ENCODE measurements at regions of chr1 and their contacts with region 1.

Region 1: DNA sequence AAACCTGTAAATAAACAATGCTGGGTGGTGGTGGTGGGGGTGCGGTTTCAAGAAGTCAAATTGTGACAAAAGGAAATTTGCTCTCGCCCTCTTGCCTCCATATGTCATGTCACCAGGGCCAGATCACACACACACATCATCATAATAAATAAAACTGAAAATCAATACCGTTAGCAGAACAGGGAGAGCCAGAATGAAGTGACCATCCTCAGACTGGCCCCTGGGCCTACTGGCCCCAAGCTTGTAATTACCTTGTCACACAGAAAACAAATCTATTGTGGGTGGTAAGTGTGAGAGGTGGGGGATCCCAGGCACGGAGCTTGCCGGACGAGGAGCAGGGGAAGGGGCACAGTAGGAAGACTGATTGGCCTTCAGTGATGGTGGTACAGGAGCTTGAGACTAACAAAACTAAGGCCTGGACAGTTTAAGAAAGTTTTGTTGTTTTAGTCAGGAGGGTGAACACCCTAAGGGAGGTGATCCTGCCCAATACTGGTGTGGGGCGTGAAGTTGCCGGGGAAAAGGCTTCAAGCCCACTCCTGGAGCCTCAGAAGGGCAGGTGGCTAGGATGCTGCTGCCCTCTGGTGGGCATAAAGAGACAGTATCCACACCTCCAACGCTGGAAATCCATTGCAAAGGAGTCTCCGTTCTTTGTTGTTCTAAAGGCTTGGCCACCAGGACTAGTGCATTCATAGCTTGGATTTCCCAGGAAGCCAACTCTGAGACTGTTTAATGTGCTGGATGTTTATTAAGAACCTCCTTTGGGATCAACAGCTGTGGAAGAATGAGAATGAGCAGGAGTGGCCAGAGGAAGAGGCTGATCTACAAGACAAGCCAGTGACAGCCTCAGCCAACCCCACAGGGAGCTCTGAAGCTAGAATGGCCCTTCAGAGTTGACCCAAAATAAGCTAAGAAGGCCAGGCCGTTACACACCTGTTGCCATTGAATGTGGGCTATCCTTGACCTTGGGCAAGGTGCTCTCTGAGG is 8.1 kb upstream of the C1orf216 start:
- DNase-seq: peak; percentile 71 to 82 (median 76)
- H3K4me3 ChIP-seq: no peak overlapping the region
- H3K27ac ChIP-seq: no peak overlapping the region
- H3K4me1 ChIP-seq: peaks cover 0 to 23% (median 14%) of the 10 kb centered on the region in 4 experiments
- H3K27me3 ChIP-seq: no peaks in the 10 kb centered on the region

Region 2: DNA sequence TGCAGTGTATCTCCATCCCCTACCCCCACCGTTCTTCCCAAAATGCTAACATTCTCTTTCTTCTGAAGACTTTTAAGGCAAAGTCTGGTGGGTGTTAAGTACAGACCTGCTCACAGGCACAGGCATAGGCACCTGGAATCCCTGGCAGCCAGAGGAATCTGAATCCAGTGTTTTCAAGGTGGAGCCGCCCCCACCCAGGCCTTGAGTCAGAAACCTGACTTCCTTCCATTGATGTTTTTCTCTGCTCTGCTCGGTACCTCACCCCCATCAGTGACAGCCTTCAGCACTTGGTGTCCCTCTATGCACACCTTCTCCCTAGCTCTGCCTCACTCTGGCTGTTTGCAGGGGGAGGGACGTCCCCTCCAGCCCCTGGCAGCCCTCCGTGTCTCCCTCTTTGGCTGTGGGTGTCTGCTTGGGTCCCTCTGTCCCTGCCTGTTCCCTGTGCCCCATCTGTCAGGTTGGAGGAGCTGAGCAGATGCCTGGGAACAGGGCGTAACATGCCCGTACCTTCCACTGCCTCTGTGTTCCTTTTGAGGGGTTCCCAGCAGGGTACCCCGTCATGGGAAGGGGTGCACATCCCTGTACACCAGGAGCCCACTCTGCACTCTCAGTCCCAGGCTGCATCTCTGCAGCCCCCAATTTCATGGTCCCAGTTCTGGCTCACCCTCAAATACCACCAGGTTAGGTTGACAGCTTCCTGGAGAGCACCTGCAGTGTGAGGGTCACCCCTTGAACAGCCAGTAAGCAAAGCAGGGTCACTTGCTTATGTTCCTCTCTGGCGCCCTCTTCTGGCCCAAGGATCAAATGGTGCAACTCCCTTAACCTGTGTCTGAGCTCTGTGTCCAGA is 162.5 kb before region 1 on chr1:
- CTCF ChIA-PET with region 1: interaction called, 97 read pairs
- POLR2A ChIA-PET with region 1: no interaction called
- DNase-seq: peak; percentile 76 to 86 (median 77)
- H3K4me3 ChIP-seq: no peak overlapping the region
- H3K27ac ChIP-seq: no peak overlapping the region
- H3K4me1 ChIP-seq: peaks cover 0 to 24% (median 15%) of the 10 kb centered on the region in 4 experiments
- H3K27me3 ChIP-seq: no peaks in the 10 kb centered on the region

Region 3: GRCh38 chr1:35702508-35702907 is 24.2 kb before region 1 on chr1:
- CTCF ChIA-PET with region 1: interaction called, 11 read pairs
- POLR2A ChIA-PET with region 1: interaction called, 4 read pairs
- DNase-seq: no peak
- H3K4me3 ChIP-seq: no peak overlapping the region
- H3K27ac ChIP-seq: no peak overlapping the region
- H3K4me1 ChIP-seq: peaks cover 0 to 6% (median 3%) of the 10 kb centered on the region in 4 experiments
- H3K27me3 ChIP-seq: peaks cover 17 to 80% (median 35%) of the 10 kb centered on the region in 5 experiments

Region 4: DNA sequence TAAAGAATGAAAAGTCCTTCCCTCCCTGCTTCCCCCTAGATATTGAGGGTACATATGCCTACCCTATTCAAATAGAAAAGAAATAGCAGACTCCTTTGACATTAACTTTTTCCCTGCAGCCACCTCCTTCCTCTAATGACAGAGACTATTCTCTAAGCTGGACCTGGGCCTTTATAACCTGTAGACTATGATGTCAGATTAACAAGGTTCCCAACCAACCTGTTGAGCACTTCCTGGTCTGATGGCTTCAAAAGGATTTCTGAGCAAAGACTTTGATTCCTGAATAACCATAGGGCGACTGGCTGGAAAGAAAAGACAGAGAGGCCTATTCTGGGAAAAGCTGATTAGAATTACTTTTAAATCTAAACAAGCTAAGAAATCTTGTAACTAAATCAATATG is 10.4 kb after region 1 on chr1:
- CTCF ChIA-PET with region 1: interaction called, 34 read pairs
- POLR2A ChIA-PET with region 1: no interaction called
- DNase-seq: no peak
- H3K4me3 ChIP-seq: no peak overlapping the region
- H3K27ac ChIP-seq: no peak overlapping the region
- H3K4me1 ChIP-seq: no peaks in the 10 kb centered on the region
- H3K27me3 ChIP-seq: no peaks in the 10 kb centered on the region

Region 5: GRCh38 chr1:35753626-35754260 is 27.0 kb after region 1 on chr1:
- CTCF ChIA-PET with region 1: interaction called, 28 read pairs
- POLR2A ChIA-PET with region 1: no interaction called
- DNase-seq: no peak
- H3K4me3 ChIP-seq: no peak overlapping the region
- H3K27ac ChIP-seq: no peak overlapping the region
- H3K4me1 ChIP-seq: no peaks in the 10 kb centered on the region
- H3K27me3 ChIP-seq: no peaks in the 10 kb centered on the region